HepG2 (cell line): ENCODE measurements at regions of chr10 and their contacts with region 1.

Region 1: GRCh38 chr10:21681156-21681555 is 147.1 kb downstream of the MLLT10 start:
- DNase-seq: no peak
- ATAC-seq: no peak
- H3K4me3 ChIP-seq: no peak overlapping the region
- H3K27ac ChIP-seq: no peak overlapping the region
- H3K4me1 ChIP-seq: peaks cover 6% of the 10 kb centered on the region; the same call in 1 of the 2 replicates
- H3K27me3 ChIP-seq: no peaks in the 10 kb centered on the region
- CTCF ChIP-seq: no peak
- EP300 ChIP-seq: no peak
- POLR2A ChIP-seq: no peak
- RAD21 ChIP-seq: no peak

Region 2: GRCh38 chr10:21724695-21725367 is 43.7 kb after region 1 on chr10:
- CTCF ChIA-PET with region 1: no interaction called
- POLR2A ChIA-PET with region 1: no interaction called
- in situ Hi-C with region 1: no loop called
- intact Hi-C with region 1: loop called (anchors 5 kb)
- DNase-seq: peak; percentile 98
- ATAC-seq: peak; percentile 97
- H3K4me3 ChIP-seq: no peak overlapping the region
- H3K27ac ChIP-seq: peak overlapping the region; percentile 49
- H3K4me1 ChIP-seq: peaks cover 36% of the 10 kb centered on the region
- H3K27me3 ChIP-seq: no peaks in the 10 kb centered on the region
- CTCF ChIP-seq: no peak
- EP300 ChIP-seq: peak in 1 of 2 experiments; percentile 68; a peak in 2 of 4 replicates
- POLR2A ChIP-seq: no peak
- RAD21 ChIP-seq: no peak